Activated T-helper 1 cell treated with anti-CD3 and anti-CD28 coated beads, Interleukin-12 subunit alpha, Interleukin-12 subunit beta, Interleukin-2, Interleukin-4 antibody, amounts not matched to agents 30 ng/mL and 10 ng/mL and 1 ng/mL, durations not matched to agents 14 hours and 24 hours and 36 hours (primary cell): ENCODE measurements at regions of chr6 and their contacts with region 1.

Region 1: GRCh38 chr6:158853072-158853871 is 34.1 kb upstream of the EZR start:
- DNase-seq: peak; percentile 85
- H3K4me3 Mint-ChIP-seq: no peak overlapping the region
- H3K27ac Mint-ChIP-seq: no peak overlapping the region
- H3K4me1 Mint-ChIP-seq: peaks cover 20% of the 10 kb centered on the region
- H3K27me3 Mint-ChIP-seq: no peaks in the 10 kb centered on the region

Region 2: DNA sequence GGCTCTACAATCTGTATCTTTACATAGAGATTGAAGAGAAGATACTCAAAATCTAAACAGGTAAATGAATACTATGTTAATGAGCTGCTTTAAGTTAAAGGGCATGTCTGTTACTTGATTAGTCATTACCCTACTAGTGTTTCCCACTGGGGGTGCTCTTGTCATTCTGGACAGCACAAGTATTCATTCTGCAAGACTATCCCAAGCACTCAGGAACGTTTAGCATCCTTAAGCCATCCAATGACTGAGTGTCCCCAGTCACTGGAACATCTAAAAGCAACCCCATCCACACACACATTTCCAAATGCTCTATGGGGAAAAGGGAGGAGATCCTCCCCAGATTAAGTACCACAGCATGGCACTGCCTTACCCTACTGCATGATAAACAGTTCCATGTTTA is 59.8 kb before region 1 on chr6:
- intact Hi-C with region 1: loop called (anchors 2 kb)
- DNase-seq: no peak
- H3K4me3 Mint-ChIP-seq: no peak overlapping the region
- H3K27ac Mint-ChIP-seq: peak overlapping the region; percentile 4
- H3K4me1 Mint-ChIP-seq: peaks cover 73% of the 10 kb centered on the region
- H3K27me3 Mint-ChIP-seq: no peaks in the 10 kb centered on the region

Region 3: GRCh38 chr6:158863646-158864045 is 10.4 kb after region 1 on chr6:
- intact Hi-C with region 1: no loop called
- DNase-seq: no peak
- H3K4me3 Mint-ChIP-seq: no peak overlapping the region
- H3K27ac Mint-ChIP-seq: no peak overlapping the region
- H3K4me1 Mint-ChIP-seq: peaks cover 16% of the 10 kb centered on the region
- H3K27me3 Mint-ChIP-seq: peaks cover 2% of the 10 kb centered on the region

Region 4: GRCh38 chr6:158879180-158879579 is 25.9 kb after region 1 on chr6:
- intact Hi-C with region 1: loop called (anchors 1 kb)
- DNase-seq: peak; percentile 34
- H3K4me3 Mint-ChIP-seq: no peak overlapping the region
- H3K27ac Mint-ChIP-seq: no peak overlapping the region
- H3K4me1 Mint-ChIP-seq: peaks cover 12% of the 10 kb centered on the region
- H3K27me3 Mint-ChIP-seq: peaks cover 1% of the 10 kb centered on the region

Region 5: GRCh38 chr6:159062564-159062945 is 209.3 kb after region 1 on chr6:
- intact Hi-C with region 1: loop called (anchors 1 kb)
- DNase-seq: peak; percentile 70
- H3K4me3 Mint-ChIP-seq: peak overlapping the region; percentile 67
- H3K27ac Mint-ChIP-seq: peak overlapping the region; percentile 93
- H3K4me1 Mint-ChIP-seq: peaks cover 92% of the 10 kb centered on the region
- H3K27me3 Mint-ChIP-seq: peaks cover 2% of the 10 kb centered on the region

Region 6: GRCh38 chr6:159761873-159762680 is 908.8 kb after region 1 on chr6 and contains the start of gene ACAT2:
- intact Hi-C with region 1: loop called (anchors 5 kb)
- DNase-seq: peak; percentile 94
- H3K4me3 Mint-ChIP-seq: peak within 1 kb of the TSS; percentile 97
- H3K27ac Mint-ChIP-seq: peak within 1 kb of the TSS; percentile 93
- H3K4me1 Mint-ChIP-seq: peaks cover 45% of the 10 kb centered on the region
- H3K27me3 Mint-ChIP-seq: no peaks in the 10 kb centered on the region
- total RNA-seq, gene ACAT2: 83.1 and 84.2 TPM in 2 replicates